ENCODE measurements at regions of chr2 and their contacts with region 1.

Region 1: GRCh38 chr2:172465417-172466334 is 38.3 kb downstream of the ITGA6 start:
- DNase-seq: peak in 3 of 4 donors; percentile 58 to 79 (median 64)
- ATAC-seq: peak; percentile 93
- H3K4me3 ChIP-seq: no peak overlapping the region
- H3K27ac ChIP-seq: no peak overlapping the region
- H3K4me1 ChIP-seq: peaks cover 4 to 51% of the 10 kb centered on the region in 2 donors
- H3K27me3 ChIP-seq: no peaks in the 10 kb centered on the region
- CTCF ChIP-seq: peak; percentile 79

Region 2: DNA sequence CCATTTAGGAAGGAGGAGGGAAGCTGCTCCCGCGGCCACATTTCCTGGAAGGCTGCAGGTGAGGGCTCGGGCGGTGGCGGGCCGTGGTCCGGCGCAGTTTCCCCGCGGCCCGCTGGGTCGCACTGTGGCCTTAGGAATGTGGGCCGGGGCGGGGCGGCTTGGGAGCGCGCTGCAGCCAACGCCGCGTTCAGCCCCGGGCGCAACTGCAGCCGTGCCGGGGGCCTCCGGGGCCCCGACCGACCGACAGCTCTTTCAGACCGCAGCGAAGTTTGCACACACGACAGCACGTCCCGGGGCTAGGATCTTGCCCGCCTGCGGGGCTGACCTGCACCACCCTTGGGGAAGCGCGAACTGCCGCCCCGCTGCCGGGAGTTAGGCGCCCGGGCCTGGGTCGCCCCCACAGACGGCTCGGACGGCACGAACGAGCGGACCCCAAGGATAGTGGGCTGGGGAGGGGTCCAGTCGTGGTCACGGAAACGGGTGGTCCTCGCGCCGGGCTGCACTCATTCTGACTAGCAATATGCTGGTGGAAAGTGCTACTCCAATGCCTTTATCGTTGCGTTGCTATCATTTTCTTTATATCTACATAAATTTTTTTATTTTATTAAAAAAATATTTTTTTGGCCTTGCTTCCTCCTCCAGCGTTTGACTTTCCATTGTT is 293.0 kb before region 1 on chr2:
- intact Hi-C with region 1: loop called in 1 of 2 experiments (anchors 2 kb)
- DNase-seq: peak; percentile 55 to 94 (median 74)
- ATAC-seq: peak; percentile 100
- H3K4me3 ChIP-seq: peak overlapping the region; percentile 44 to 45
- H3K27ac ChIP-seq: no peak overlapping the region
- H3K4me1 ChIP-seq: peaks cover 6 to 12% of the 10 kb centered on the region in 2 donors
- H3K27me3 ChIP-seq: peaks cover 0 to 28% of the 10 kb centered on the region in 2 donors
- CTCF ChIP-seq: peak; percentile 77 to 84

Region 3: GRCh38 chr2:172366596-172367150 is 99.0 kb before region 1 on chr2:
- intact Hi-C with region 1: no loop called
- DNase-seq: no peak
- ATAC-seq: no peak
- H3K4me3 ChIP-seq: no peak overlapping the region
- H3K27ac ChIP-seq: no peak overlapping the region
- H3K4me1 ChIP-seq: no peaks in the 10 kb centered on the region
- H3K27me3 ChIP-seq: no peaks in the 10 kb centered on the region
- CTCF ChIP-seq: no peak

Measured in left lung (tissue), 14 donors.